Activated CD8-positive, alpha-beta T cell treated with anti-CD3 and anti-CD28 coated beads, Interleukin-2, amount 10 ng/mL, durations not matched to agents 7 days and 5 days (primary cell): ENCODE measurements at regions of chr14 and their contacts with region 1.

Region 1: DNA sequence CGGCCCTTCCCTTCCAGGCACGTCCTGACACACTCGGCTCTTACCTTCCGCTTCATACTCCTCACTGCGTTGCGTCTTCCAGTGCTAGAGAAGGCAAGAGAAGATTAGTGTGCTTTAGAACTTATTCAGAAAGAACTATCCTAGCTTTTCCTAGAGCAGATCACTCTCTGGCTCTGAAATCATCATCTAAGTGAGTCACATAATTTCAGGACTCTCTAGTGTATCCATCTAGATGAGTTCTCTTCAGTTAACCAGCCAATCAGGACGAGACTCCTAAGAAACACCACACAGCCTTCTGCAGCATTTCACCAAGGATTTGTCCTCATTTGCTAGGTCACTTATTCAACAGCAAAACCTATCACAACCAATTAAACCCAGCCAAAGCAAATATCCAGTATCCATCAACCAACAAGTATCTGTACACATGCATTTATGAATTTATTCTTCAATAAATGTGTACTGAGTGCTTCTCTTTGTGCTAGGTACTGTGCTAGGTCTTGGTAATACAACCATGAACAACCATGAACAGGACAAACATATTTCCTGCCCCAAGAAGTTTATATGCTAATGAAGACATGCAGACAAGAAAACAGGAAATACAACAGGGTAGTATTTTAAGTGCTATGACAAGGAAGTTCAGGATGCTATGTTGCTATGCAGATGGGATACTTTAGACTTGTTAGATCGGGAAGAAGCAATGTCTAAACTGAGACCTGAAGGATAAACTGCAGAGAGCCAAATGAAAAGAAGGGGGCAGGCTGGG is 52.1 kb downstream of the NIN start:
- DNase-seq: no peak
- ATAC-seq: no peak
- H3K4me3 Mint-ChIP-seq: no peak overlapping the region
- H3K27ac Mint-ChIP-seq: peak overlapping the region; percentile 76
- H3K4me1 Mint-ChIP-seq: peaks cover 31% of the 10 kb centered on the region
- H3K27me3 Mint-ChIP-seq: no peaks in the 10 kb centered on the region

Region 2: DNA sequence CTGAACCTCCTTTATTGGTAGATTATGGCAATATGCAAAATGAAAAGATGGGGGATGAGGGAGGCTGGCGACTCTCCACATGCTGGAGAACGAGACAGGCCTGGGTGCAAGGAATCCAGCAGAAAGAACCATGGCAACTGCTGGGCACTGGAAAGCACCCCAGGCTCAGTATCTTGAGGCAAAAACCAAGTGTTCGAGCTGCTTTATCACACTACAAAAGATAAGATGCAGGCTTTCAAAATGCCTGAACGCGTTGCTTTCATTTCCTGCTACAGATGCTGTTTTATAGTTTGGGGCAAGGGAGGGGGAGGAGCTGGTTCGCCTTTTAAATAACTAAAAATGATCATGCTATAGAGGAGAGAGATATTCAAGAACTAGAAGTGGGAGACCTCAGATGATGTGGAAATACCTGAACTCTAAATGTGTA is 13.2 kb after region 1 on chr14:
- CTCF ChIA-PET with region 1: interaction called, 35 read pairs
- POLR2A ChIA-PET with region 1: no interaction called
- DNase-seq: peak; percentile 39
- ATAC-seq: peak; percentile 57
- H3K4me3 Mint-ChIP-seq: peak overlapping the region; percentile 67
- H3K27ac Mint-ChIP-seq: peak overlapping the region; percentile 93
- H3K4me1 Mint-ChIP-seq: peaks cover 65% of the 10 kb centered on the region
- H3K27me3 Mint-ChIP-seq: no peaks in the 10 kb centered on the region

Region 3: DNA sequence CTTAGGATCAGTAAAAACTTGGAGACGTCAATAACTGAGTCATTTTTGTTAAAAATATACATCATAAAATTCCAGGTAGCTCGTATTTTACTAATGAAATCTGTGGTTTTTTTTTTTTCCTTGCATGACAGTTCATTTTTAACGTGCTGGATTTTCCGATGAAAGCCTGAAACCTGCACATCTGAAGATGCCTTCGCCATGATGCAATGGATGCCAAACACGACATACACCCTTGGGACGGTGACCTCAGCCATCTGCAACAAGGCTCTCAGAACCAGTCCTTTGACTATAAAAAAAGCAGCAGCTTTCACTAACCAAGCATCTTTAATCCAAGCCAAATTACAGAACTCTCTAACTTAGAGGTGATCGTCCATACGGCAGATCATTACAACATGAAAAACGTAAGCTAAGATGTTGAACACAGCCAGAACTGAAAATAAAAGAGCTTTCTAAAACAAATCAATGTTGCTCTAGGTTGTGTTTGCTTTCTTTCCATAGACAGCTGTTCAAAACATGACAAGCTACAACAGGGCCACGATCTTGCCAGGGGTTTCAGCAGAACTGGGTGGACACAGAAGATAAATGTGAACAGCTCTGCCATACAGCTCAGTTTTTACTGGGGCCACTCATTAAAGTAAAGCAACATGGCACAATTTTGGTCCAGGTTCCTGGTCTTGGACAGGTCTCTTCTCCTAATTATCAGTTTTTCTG is 44.3 kb after region 1 on chr14:
- CTCF ChIA-PET with region 1: interaction called, 10 read pairs
- POLR2A ChIA-PET with region 1: no interaction called
- DNase-seq: no peak
- ATAC-seq: peak; percentile 21
- H3K4me3 Mint-ChIP-seq: peak overlapping the region; percentile 73
- H3K27ac Mint-ChIP-seq: peak overlapping the region; percentile 94
- H3K4me1 Mint-ChIP-seq: peaks cover 89% of the 10 kb centered on the region
- H3K27me3 Mint-ChIP-seq: no peaks in the 10 kb centered on the region

Region 4: DNA sequence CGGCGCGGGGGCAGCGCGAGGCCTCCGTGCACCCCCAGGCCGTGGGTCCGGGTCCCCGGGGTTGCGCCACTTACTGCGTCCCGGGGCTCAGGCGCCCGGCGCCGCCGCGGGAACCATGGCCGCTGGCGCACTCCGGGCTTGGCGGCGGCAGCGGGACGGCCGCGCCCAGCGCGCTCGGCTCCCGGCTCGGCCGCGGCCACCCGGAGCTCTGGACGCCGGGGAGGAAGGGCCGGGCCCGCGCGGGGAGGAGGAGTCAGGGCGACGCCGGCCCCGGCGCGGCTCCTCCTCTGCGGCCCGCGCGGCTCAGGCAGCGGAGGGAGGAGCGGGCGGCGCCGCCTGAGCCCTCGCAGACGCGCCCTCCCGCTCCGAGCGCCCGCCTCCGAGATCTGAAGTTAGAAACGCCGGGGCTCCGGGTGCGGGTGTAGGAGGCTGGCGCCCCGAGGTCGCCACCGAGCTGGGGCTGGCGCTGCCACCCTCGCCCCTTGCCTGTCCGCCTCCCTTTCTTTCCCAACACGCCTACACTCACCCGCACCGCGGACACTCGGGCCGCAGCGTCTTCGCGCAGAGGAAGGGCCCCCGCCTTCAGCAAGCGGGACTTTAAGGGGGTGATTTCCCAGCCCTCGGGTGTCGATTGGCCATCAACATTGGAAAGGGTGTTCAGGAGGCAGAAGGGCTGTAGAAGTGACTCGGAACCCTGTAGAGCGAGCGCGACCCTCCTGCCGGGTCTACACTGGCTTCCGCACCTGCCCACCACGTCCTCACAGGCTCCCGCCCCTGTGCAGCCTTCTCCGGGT is 52.2 kb after region 1 on chr14 and contains the start of gene NIN:
- CTCF ChIA-PET with region 1: interaction called, 25 read pairs
- POLR2A ChIA-PET with region 1: no interaction called
- DNase-seq: peak; percentile 78
- ATAC-seq: peak; percentile 90
- H3K4me3 Mint-ChIP-seq: peak within 1 kb of the TSS; percentile 92
- H3K27ac Mint-ChIP-seq: peak within 1 kb of the TSS; percentile 94
- H3K4me1 Mint-ChIP-seq: peaks cover 67% of the 10 kb centered on the region
- H3K27me3 Mint-ChIP-seq: no peaks in the 10 kb centered on the region
- total RNA-seq, gene NIN: 104 TPM